Esophagus muscularis mucosa (tissue), 4 donors: ENCODE measurements at regions of chr6 and their contacts with region 1.

Region 1: GRCh38 chr6:73732845-73733675 is 37.1 kb downstream of the CD109 start:
- DNase-seq: no peak
- H3K4me3 ChIP-seq: no peak overlapping the region
- H3K27ac ChIP-seq: no peak overlapping the region
- H3K4me1 ChIP-seq: peaks cover 0 to 5% (median 0%) of the 10 kb centered on the region in 4 donors
- H3K27me3 ChIP-seq: no peaks in the 10 kb centered on the region
- CTCF ChIP-seq: peak; percentile 89 to 95 (median 91)
- EP300 ChIP-seq: no peak
- POLR2A ChIP-seq: no peak

Region 2: DNA sequence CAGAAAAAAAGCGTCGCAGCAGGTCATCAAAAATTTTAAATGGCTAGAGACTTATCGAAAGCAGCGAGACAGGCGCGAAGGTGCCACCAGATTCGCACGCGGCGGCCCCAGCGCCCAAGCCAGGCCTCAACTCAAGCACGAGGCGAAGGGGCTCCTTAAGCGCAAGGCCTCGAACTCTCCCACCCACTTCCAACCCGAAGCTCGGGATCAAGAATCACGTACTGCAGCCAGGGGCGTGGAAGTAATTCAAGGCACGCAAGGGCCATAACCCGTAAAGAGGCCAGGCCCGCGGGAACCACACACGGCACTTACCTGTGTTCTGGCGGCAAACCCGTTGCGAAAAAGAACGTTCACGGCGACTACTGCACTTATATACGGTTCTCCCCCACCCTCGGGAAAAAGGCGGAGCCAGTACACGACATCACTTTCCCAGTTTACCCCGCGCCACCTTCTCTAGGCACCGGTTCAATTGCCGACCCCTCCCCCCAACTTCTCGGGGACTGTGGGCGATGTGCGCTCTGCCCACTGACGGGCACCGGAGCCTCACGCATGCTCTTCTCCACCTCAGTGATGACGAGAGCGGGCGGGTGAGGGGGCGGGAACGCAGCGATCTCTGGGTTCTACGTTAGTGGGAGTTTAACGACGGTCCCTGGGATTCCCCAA is 212.2 kb before region 1 on chr6 and contains the start of gene EEF1A1:
- intact Hi-C with region 1: loop called (anchors 10 kb)
- DNase-seq: peak; percentile 100
- H3K4me3 ChIP-seq: peak within 1 kb of the TSS; percentile 70 to 96 (median 89)
- H3K27ac ChIP-seq: peak within 1 kb of the TSS; percentile 97 to 98 (median 98)
- H3K4me1 ChIP-seq: peaks cover 35 to 65% (median 58%) of the 10 kb centered on the region in 4 donors
- H3K27me3 ChIP-seq: peaks cover 0 to 5% (median 0%) of the 10 kb centered on the region in 4 donors
- CTCF ChIP-seq: peak in 1 of 3 experiments; percentile 16
- EP300 ChIP-seq: peak; percentile 80
- POLR2A ChIP-seq: peak; percentile 100
- total RNA-seq, gene EEF1A1: 6,828 to 12,822 (median 11,636) TPM

Region 3: GRCh38 chr6:73604020-73604419 is 129.0 kb before region 1 on chr6:
- intact Hi-C with region 1: no loop called
- DNase-seq: no peak
- H3K4me3 ChIP-seq: no peak overlapping the region
- H3K27ac ChIP-seq: no peak overlapping the region
- H3K4me1 ChIP-seq: peaks cover 0 to 11% (median 7%) of the 10 kb centered on the region in 4 donors
- H3K27me3 ChIP-seq: no peaks in the 10 kb centered on the region
- CTCF ChIP-seq: no peak
- EP300 ChIP-seq: no peak
- POLR2A ChIP-seq: no peak

Region 4: DNA sequence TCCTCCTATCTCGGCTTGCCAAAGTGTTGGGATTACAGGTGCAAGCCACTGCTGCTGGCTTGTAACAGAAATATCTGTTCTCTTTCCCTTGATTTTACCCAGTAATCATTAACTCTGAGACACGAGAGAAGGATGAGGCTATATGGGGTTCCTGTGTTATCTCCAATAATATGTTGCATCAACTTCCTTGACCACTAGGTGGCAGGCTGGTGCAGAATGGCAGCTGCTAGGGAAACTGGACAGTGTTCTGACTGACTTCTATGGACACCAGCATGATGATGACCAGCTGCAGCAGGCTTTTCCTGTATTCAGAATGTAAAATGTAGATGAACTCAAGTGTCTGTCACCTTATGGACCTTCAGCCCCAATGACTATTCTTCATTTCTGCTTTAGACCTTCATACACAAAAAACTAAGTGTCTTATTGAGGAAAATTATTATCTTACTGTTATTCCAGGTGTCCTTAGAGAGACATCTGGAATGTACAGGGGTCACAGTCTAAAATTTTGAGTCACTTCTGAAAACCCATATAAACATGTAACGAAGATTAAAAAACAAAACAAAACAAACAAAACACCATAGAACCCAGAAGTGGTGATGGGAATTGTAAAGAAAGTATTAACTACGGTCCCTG is 57.5 kb before region 1 on chr6:
- intact Hi-C with region 1: loop called (anchors 1 kb)
- DNase-seq: peak; percentile 94
- H3K4me3 ChIP-seq: no peak overlapping the region
- H3K27ac ChIP-seq: no peak overlapping the region
- H3K4me1 ChIP-seq: peaks cover 0 to 3% (median 0%) of the 10 kb centered on the region in 4 donors
- H3K27me3 ChIP-seq: no peaks in the 10 kb centered on the region
- CTCF ChIP-seq: peak; percentile 83 to 90 (median 87)
- EP300 ChIP-seq: no peak
- POLR2A ChIP-seq: no peak

Region 5: DNA sequence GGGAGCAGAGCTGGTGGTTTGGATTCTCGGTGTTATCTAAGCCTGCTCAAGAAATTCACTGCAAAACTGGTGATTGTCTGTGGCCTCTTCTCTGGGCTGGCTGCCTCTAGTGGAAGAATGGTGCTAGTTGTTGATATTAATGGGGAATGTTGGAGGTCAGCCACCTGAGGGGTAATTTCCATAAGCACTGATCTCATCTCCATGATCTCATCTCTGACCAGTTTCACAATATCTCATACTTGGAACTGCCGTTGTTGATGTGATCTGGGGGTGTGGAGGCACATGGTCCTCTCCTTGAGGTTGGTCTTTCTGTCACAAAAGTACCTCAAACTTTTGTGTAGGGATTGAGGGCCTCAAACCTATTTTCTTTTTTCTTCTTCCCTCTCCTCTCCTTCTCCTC is 65.5 kb after region 1 on chr6:
- intact Hi-C with region 1: no loop called
- DNase-seq: no peak
- H3K4me3 ChIP-seq: no peak overlapping the region
- H3K27ac ChIP-seq: peak overlapping the region in 2 of 4 donors; percentile 5 to 50
- H3K4me1 ChIP-seq: peaks cover 0 to 9% (median 2%) of the 10 kb centered on the region in 4 donors
- H3K27me3 ChIP-seq: no peaks in the 10 kb centered on the region
- CTCF ChIP-seq: peak in 1 of 3 experiments; percentile 45
- EP300 ChIP-seq: no peak
- POLR2A ChIP-seq: no peak